Panc1 (cell line): ENCODE measurements at regions of chr11 and their contacts with region 1.

Region 1: GRCh38 chr11:120964857-120965256 is 59.0 kb upstream of the TBCEL start:
- DNase-seq: no peak
- ATAC-seq: no peak
- H3K4me3 ChIP-seq: no peak overlapping the region
- H3K27ac ChIP-seq: no peak overlapping the region
- H3K4me1 ChIP-seq: no peaks in the 10 kb centered on the region
- H3K27me3 ChIP-seq: peaks cover 46% of the 10 kb centered on the region
- CTCF ChIP-seq: no peak

Region 2: GRCh38 chr11:121023848-121024751 is 59.2 kb after region 1 on chr11 and contains the start of gene TBCEL:
- CTCF ChIA-PET with region 1: no interaction called
- POLR2A ChIA-PET with region 1: interaction called, 10 read pairs
- in situ Hi-C with region 1: no loop called
- intact Hi-C with region 1: no loop called
- DNase-seq: peak; percentile 30
- ATAC-seq: peak; percentile 97
- H3K4me3 ChIP-seq: peak within 1 kb of the TSS; percentile 76 to 80
- H3K27ac ChIP-seq: peak within 1 kb of the TSS; percentile 81
- H3K4me1 ChIP-seq: peaks cover 12% of the 10 kb centered on the region
- H3K27me3 ChIP-seq: peaks cover under 1% of the 10 kb centered on the region; the same call in 1 of the 2 replicates
- CTCF ChIP-seq: no peak
- total RNA-seq, gene TBCEL: 23.2 TPM